ENCODE measurements at regions of chr13 and their contacts with region 1.

Region 1: DNA sequence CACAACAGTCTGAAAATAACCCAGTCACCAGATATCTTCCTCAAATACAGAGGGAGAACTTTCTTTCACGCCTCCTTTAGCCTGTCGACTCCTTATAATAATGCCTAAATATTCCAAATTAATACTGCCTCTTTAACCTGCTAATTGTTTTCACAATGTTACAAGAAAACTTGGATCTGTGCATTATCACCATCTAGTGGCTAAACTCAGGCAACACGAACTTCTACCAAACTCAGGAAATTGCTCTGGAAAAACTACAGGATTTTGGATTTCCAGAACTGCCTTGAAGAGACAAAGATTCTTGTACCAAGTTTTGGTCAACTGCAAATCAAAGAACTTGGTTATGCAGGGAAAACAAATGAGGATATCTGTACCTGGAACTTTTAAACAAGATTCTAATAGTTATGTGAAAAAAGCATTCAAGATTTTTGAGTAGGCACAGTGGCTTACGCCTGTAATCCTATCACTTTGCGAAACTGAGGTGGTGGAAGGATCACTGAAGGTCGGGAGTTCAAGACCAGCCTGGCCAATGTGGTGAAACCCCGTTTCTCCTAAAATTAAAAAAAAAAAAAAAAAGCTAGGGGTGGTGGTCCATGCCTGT is 10.8 kb downstream of the CLN5 start:
- DNase-seq: peak; percentile 30
- H3K4me3 ChIP-seq: no peak overlapping the region
- H3K27ac ChIP-seq: peak overlapping the region in 1 of 2 experiments; percentile 39; a peak in 1 of 4 replicates
- H3K4me1 ChIP-seq: peaks cover 0 to 6% of the 10 kb centered on the region in 2 experiments; a peak in 2 of 4 replicates
- H3K27me3 ChIP-seq: no peaks in the 10 kb centered on the region
- CTCF ChIP-seq: peak; percentile 76
- EP300 ChIP-seq: no peak
- RAD21 ChIP-seq: peak; percentile 59

Region 2: GRCh38 chr13:76991796-76992547 is 10.7 kb before region 1 on chr13 and contains the start of gene CLN5:
- CTCF ChIA-PET with region 1: interaction called, 17 read pairs
- POLR2A ChIA-PET with region 1: no interaction called
- DNase-seq: peak; percentile 97
- H3K4me3 ChIP-seq: peak within 1 kb of the TSS; percentile 86 to 94
- H3K27ac ChIP-seq: peak within 1 kb of the TSS; percentile 74 to 79
- H3K4me1 ChIP-seq: peaks cover 11 to 13% of the 10 kb centered on the region in 2 experiments; a peak in 3 of 4 replicates
- H3K27me3 ChIP-seq: no peaks in the 10 kb centered on the region
- CTCF ChIP-seq: no peak
- EP300 ChIP-seq: 0 out of 4 replicates have a peak, but pooled peaks of 1 of the 2 experiments have one; percentile 15
- RAD21 ChIP-seq: no peak
- polyA plus RNA-seq, gene CLN5: 11.6 and 13.3 TPM in 2 replicates

Region 3: GRCh38 chr13:77016888-77017623 is 14.4 kb after region 1 on chr13:
- CTCF ChIA-PET with region 1: interaction called, 19 read pairs
- POLR2A ChIA-PET with region 1: no interaction called
- DNase-seq: no peak
- H3K4me3 ChIP-seq: no peak overlapping the region
- H3K27ac ChIP-seq: no peak overlapping the region
- H3K4me1 ChIP-seq: no peaks in the 10 kb centered on the region; a peak in 3 of 4 replicates
- H3K27me3 ChIP-seq: no peaks in the 10 kb centered on the region
- CTCF ChIP-seq: peak; percentile 24
- EP300 ChIP-seq: no peak
- RAD21 ChIP-seq: no peak

Measured in SK-N-SH (cell line).